Activated naive CD8-positive, alpha-beta T cell treated with anti-CD3 and anti-CD28 coated beads, Interleukin-2, amount 10 ng/mL, durations not matched to agents 7 days and 5 days (primary cell): ENCODE measurements at regions of chr6 and their contacts with region 1.

Region 1: GRCh38 chr6:109382576-109383437 is 540 bp upstream of the CD164 start:
- DNase-seq: peak; percentile 92
- ATAC-seq: peak; percentile 65
- H3K4me3 Mint-ChIP-seq: peak overlapping the region; percentile 98
- H3K27ac Mint-ChIP-seq: peak overlapping the region; percentile 99
- H3K4me1 Mint-ChIP-seq: peaks cover 30% of the 10 kb centered on the region
- H3K27me3 Mint-ChIP-seq: no peaks in the 10 kb centered on the region

Region 2: GRCh38 chr6:108558372-108559096 is 824.3 kb before region 1 on chr6:
- POLR2A ChIA-PET with region 1: interaction called, 15 read pairs
- DNase-seq: peak; percentile 95
- ATAC-seq: peak; percentile 72
- H3K4me3 Mint-ChIP-seq: peak overlapping the region; percentile 92
- H3K27ac Mint-ChIP-seq: peak overlapping the region; percentile 92
- H3K4me1 Mint-ChIP-seq: peaks cover 21% of the 10 kb centered on the region
- H3K27me3 Mint-ChIP-seq: peaks cover 24% of the 10 kb centered on the region

Region 3: GRCh38 chr6:109187399-109188114 is 195.2 kb before region 1 on chr6:
- POLR2A ChIA-PET with region 1: interaction called, 41 read pairs
- DNase-seq: peak; percentile 63
- ATAC-seq: peak; percentile 73
- H3K4me3 Mint-ChIP-seq: no peak overlapping the region
- H3K27ac Mint-ChIP-seq: no peak overlapping the region
- H3K4me1 Mint-ChIP-seq: peaks cover 4% of the 10 kb centered on the region
- H3K27me3 Mint-ChIP-seq: peaks cover 42% of the 10 kb centered on the region

Region 4: GRCh38 chr6:109242925-109243324 is 139.9 kb before region 1 on chr6:
- POLR2A ChIA-PET with region 1: interaction called, 10 read pairs
- DNase-seq: no peak
- ATAC-seq: no peak
- H3K4me3 Mint-ChIP-seq: no peak overlapping the region
- H3K27ac Mint-ChIP-seq: no peak overlapping the region
- H3K4me1 Mint-ChIP-seq: peaks cover 22% of the 10 kb centered on the region
- H3K27me3 Mint-ChIP-seq: no peaks in the 10 kb centered on the region

Region 5: DNA sequence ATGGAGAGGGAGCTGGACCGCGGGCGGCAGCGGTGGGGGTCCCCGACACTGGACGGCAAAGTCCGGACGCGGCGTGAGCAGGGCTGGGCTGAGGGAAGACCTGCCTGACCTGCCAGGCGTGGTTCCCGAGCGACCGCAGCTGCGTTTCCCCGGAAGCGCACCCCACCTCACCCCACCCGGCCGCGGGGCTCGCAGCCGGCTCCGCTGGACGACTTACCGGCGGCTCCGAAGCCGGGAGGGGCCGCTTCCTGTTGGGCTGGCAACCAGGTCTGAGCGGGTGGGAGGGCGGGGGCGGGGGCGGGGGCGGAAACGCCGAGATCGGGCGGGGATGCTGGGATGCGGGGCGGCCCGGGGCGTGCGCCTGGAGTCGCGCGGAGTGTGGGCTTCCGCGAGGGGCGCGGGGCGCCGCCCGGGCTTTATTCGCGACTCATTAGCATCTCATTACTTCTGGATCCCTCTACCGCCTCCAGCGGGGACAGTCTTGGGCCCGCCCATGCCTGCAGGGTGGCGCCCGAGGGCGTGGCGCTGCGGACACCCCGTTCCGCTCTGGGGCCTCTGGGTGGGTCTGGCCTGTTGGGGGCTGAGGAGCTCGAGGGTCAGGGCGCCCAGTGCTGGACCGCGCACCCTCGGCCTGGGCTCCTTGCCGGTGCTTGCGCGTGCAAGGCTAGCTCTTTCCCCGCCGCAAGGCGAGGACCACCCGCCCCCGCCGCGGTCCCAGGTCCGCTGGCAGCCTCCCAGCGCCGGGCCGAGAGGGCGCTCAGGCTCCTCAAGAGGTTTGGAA is 72.9 kb after region 1 on chr6 and contains the start of gene MICAL1:
- POLR2A ChIA-PET with region 1: interaction called, 43 read pairs
- DNase-seq: peak; percentile 87
- ATAC-seq: peak; percentile 67
- H3K4me3 Mint-ChIP-seq: peak within 1 kb of the TSS; percentile 95
- H3K27ac Mint-ChIP-seq: peak within 1 kb of the TSS; percentile 97
- H3K4me1 Mint-ChIP-seq: peaks cover 48% of the 10 kb centered on the region
- H3K27me3 Mint-ChIP-seq: no peaks in the 10 kb centered on the region
- total RNA-seq, gene MICAL1: 80.4 to 81.5 TPM

Region 6: GRCh38 chr6:109491207-109491938 is 108.6 kb after region 1 on chr6:
- POLR2A ChIA-PET with region 1: interaction called, 16 read pairs
- DNase-seq: peak; percentile 38
- ATAC-seq: peak; percentile 100
- H3K4me3 Mint-ChIP-seq: peak overlapping the region; percentile 63
- H3K27ac Mint-ChIP-seq: peak overlapping the region; percentile 92
- H3K4me1 Mint-ChIP-seq: peaks cover 26% of the 10 kb centered on the region
- H3K27me3 Mint-ChIP-seq: peaks cover 10% of the 10 kb centered on the region